Activated CD8-positive, alpha-beta T cell treated with anti-CD3 and anti-CD28 coated beads for 36 hours (primary cell): ENCODE measurements at regions of chr17 and their contacts with region 1.

Region 1: GRCh38 chr17:47698749-47699535 is 5.0 kb downstream of the TBKBP1 start:
- DNase-seq: peak; percentile 88
- ATAC-seq: peak; percentile 21
- H3K4me3 Mint-ChIP-seq: peak overlapping the region; percentile 15
- H3K27ac Mint-ChIP-seq: peak overlapping the region; percentile 14
- H3K4me1 Mint-ChIP-seq: peaks cover 73% of the 10 kb centered on the region
- H3K27me3 Mint-ChIP-seq: no peaks in the 10 kb centered on the region
- CTCF ChIP-seq: peak; percentile 99

Region 2: GRCh38 chr17:47649153-47649971 is 49.6 kb before region 1 on chr17 and contains the start of gene KPNB1:
- CTCF ChIA-PET with region 1: interaction called, 4 read pairs
- POLR2A ChIA-PET with region 1: interaction called, 24 read pairs
- intact Hi-C with region 1: no loop called
- DNase-seq: peak; percentile 99
- ATAC-seq: peak; percentile 84
- H3K4me3 Mint-ChIP-seq: peak within 1 kb of the TSS; percentile 94
- H3K27ac Mint-ChIP-seq: peak within 1 kb of the TSS; percentile 99
- H3K4me1 Mint-ChIP-seq: peaks cover 46% of the 10 kb centered on the region
- H3K27me3 Mint-ChIP-seq: no peaks in the 10 kb centered on the region
- CTCF ChIP-seq: no peak
- total RNA-seq, gene KPNB1: 589 to 605 TPM

Region 3: GRCh38 chr17:47720754-47721533 is 22.0 kb after region 1 on chr17:
- CTCF ChIA-PET with region 1: interaction called, 240 read pairs
- POLR2A ChIA-PET with region 1: interaction called, 493 read pairs
- intact Hi-C with region 1: loop called (anchors 2 kb)
- DNase-seq: peak; percentile 100
- ATAC-seq: peak; percentile 67
- H3K4me3 Mint-ChIP-seq: peak overlapping the region; percentile 62
- H3K27ac Mint-ChIP-seq: peak overlapping the region; percentile 94
- H3K4me1 Mint-ChIP-seq: peaks cover 86% of the 10 kb centered on the region
- H3K27me3 Mint-ChIP-seq: no peaks in the 10 kb centered on the region
- CTCF ChIP-seq: peak; percentile 14

Region 4: GRCh38 chr17:47742319-47743181 is 43.6 kb after region 1 on chr17:
- CTCF ChIA-PET with region 1: interaction called, 424 read pairs
- POLR2A ChIA-PET with region 1: interaction called, 493 read pairs
- intact Hi-C with region 1: loop called (anchors 2 kb)
- DNase-seq: peak; percentile 62
- ATAC-seq: peak; percentile 42
- H3K4me3 Mint-ChIP-seq: peak overlapping the region; percentile 35
- H3K27ac Mint-ChIP-seq: peak overlapping the region; percentile 64
- H3K4me1 Mint-ChIP-seq: peaks cover 48% of the 10 kb centered on the region
- H3K27me3 Mint-ChIP-seq: no peaks in the 10 kb centered on the region
- CTCF ChIP-seq: peak; percentile 53

Region 5: GRCh38 chr17:47802341-47803022 is 103.5 kb after region 1 on chr17:
- CTCF ChIA-PET with region 1: interaction called, 9 read pairs
- POLR2A ChIA-PET with region 1: no interaction called
- intact Hi-C with region 1: loop called (anchors 5 kb)
- DNase-seq: peak; percentile 71
- ATAC-seq: peak; percentile 98
- H3K4me3 Mint-ChIP-seq: no peak overlapping the region
- H3K27ac Mint-ChIP-seq: no peak overlapping the region
- H3K4me1 Mint-ChIP-seq: no peaks in the 10 kb centered on the region
- H3K27me3 Mint-ChIP-seq: peaks cover 4% of the 10 kb centered on the region
- CTCF ChIP-seq: peak; percentile 84

Region 6: GRCh38 chr17:47872021-47872650 is 173.2 kb after region 1 on chr17:
- CTCF ChIA-PET with region 1: no interaction called
- POLR2A ChIA-PET with region 1: no interaction called
- intact Hi-C with region 1: no loop called
- DNase-seq: no peak
- ATAC-seq: no peak
- H3K4me3 Mint-ChIP-seq: no peak overlapping the region
- H3K27ac Mint-ChIP-seq: no peak overlapping the region
- H3K4me1 Mint-ChIP-seq: no peaks in the 10 kb centered on the region
- H3K27me3 Mint-ChIP-seq: peaks cover 37% of the 10 kb centered on the region
- CTCF ChIP-seq: no peak